Activated B cell treated with CpG ODN at 0.5 μM for 24 hours (primary cell): ENCODE measurements at regions of chr18 and their contacts with region 1.

Region 1: GRCh38 chr18:76963936-76964335 is 141.6 kb downstream of the ZNF236 start:
- DNase-seq: no peak
- ATAC-seq: no peak
- H3K4me3 Mint-ChIP-seq: peak overlapping the region; percentile 45
- H3K27ac Mint-ChIP-seq: no peak overlapping the region
- H3K4me1 Mint-ChIP-seq: no peaks in the 10 kb centered on the region
- H3K27me3 Mint-ChIP-seq: no peaks in the 10 kb centered on the region
- CTCF ChIP-seq: no peak

Region 2: DNA sequence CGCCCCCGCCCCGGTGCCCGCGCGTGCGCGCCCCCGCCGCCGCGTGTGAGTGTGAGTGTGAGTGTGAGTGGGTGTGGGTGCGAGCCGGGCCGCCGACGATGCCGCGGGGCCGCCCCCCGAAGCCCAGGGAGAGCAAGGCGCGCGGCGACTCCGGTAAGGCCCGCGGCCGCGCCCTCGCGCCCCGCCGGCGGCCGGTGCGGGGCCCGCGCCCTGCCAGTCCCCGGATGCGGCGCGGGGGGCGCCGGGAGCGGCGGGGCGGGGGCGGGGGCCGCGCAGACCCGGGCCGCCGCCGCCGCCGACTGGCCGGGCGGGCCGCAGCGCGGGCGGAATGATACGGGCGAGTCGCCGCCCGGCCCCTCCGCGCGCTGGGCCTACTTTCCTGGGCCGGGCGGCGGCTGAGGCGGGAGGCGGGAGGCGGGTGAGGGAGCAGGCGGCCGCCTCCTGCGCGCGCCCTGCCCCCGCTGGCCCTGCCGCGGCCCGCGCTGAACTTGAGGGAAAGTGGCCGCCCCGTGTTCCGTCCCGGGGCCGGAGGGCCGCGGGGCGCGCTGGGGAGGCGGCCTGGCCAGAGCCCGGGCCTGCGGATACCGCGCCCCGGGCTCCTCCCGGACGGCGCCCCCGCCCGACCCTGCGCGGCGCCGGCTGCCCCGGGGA is 141.3 kb before region 1 on chr18 and contains the start of gene ZNF236:
- CTCF ChIA-PET with region 1: no interaction called
- POLR2A ChIA-PET with region 1: no interaction called
- intact Hi-C with region 1: loop called (anchors 5 kb)
- DNase-seq: peak; percentile 79
- ATAC-seq: peak; percentile 58
- H3K4me3 Mint-ChIP-seq: peak within 1 kb of the TSS; percentile 95
- H3K27ac Mint-ChIP-seq: peak within 1 kb of the TSS; percentile 97
- H3K4me1 Mint-ChIP-seq: peaks cover 64% of the 10 kb centered on the region
- H3K27me3 Mint-ChIP-seq: no peaks in the 10 kb centered on the region
- CTCF ChIP-seq: no peak
- total RNA-seq, gene ZNF236: 27.4 and 28.2 TPM in 2 replicates

Region 3: DNA sequence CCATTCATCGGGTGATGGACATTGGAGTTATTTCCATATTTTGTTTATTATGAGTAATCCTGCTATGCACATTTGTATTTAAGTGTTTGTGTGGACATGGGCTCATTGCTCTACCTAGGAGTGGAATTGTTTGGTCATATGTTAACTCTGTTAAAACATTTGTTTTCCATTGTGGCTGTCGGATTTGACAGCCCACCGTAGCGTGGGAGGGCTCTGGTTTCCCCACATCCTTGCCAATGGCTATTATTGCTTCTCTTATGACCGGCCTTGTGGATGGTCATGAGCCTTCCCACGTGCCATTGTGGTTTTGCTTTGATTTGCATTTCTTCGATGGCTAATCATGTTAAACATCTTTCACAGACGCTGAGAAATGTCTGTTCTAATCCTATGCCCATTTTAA is 49.6 kb before region 1 on chr18:
- CTCF ChIA-PET with region 1: no interaction called
- POLR2A ChIA-PET with region 1: no interaction called
- intact Hi-C with region 1: no loop called
- DNase-seq: no peak
- ATAC-seq: no peak
- H3K4me3 Mint-ChIP-seq: no peak overlapping the region
- H3K27ac Mint-ChIP-seq: no peak overlapping the region
- H3K4me1 Mint-ChIP-seq: peaks cover 12% of the 10 kb centered on the region
- H3K27me3 Mint-ChIP-seq: no peaks in the 10 kb centered on the region
- CTCF ChIP-seq: no peak

Region 4: GRCh38 chr18:78596794-78597345 is 1632.9 kb after region 1 on chr18:
- CTCF ChIA-PET with region 1: no interaction called
- POLR2A ChIA-PET with region 1: no interaction called
- intact Hi-C with region 1: no loop called
- DNase-seq: no peak
- ATAC-seq: no peak
- H3K4me3 Mint-ChIP-seq: no peak overlapping the region
- H3K27ac Mint-ChIP-seq: no peak overlapping the region
- H3K4me1 Mint-ChIP-seq: no peaks in the 10 kb centered on the region
- H3K27me3 Mint-ChIP-seq: no peaks in the 10 kb centered on the region
- CTCF ChIP-seq: no peak